Activated T-helper 1 cell treated with anti-CD3 and anti-CD28 coated beads, Interleukin-12 subunit alpha, Interleukin-12 subunit beta, Interleukin-2, Interleukin-4 antibody, amounts not matched to agents 30 ng/mL and 10 ng/mL and 1 ng/mL, durations not matched to agents 14 hours and 24 hours and 36 hours (primary cell): ENCODE measurements at regions of chr21 and their contacts with region 1.

Region 1: GRCh38 chr21:25464275-25464674 is 143.0 kb downstream of the MRPL39 start:
- DNase-seq: no peak
- H3K4me3 Mint-ChIP-seq: peak overlapping the region; percentile 58
- H3K27ac Mint-ChIP-seq: peak overlapping the region; percentile 90
- H3K4me1 Mint-ChIP-seq: peaks cover 62% of the 10 kb centered on the region
- H3K27me3 Mint-ChIP-seq: no peaks in the 10 kb centered on the region

Region 2: GRCh38 chr21:25421327-25422028 is 42.8 kb before region 1 on chr21:
- intact Hi-C with region 1: no loop called
- DNase-seq: peak; percentile 60
- H3K4me3 Mint-ChIP-seq: peak overlapping the region; percentile 77
- H3K27ac Mint-ChIP-seq: peak overlapping the region; percentile 77
- H3K4me1 Mint-ChIP-seq: peaks cover 46% of the 10 kb centered on the region
- H3K27me3 Mint-ChIP-seq: peaks cover 2% of the 10 kb centered on the region

Region 3: DNA sequence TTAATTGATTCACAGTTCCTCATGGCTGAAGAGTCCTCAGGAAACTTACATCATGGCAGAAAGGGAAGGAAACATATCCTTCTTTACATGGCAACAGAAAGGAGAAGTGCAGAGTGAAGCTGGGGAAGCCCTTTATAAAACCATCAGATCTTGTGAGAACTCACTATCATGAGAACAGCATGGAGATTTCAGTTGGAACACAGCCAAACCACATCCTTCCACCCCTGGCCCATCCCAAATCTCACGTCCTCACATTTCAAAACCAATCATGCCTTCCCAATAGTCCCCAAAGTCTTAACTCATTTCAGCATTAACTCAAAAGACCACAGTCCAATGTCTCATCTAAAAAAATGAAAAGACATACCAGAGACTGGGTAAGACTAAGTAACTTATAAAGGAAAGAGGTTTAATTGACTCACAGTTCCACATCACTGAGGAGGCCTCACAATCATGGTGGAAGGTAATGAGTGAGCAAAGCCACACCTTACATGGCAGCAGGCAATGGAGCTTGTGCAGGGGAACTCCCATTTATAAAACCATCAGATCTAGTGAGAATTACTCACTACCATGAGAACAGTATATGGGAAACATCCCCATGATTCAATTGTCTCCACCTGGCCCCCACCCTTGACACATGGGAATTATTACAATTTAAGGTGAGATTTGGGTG is 37.9 kb after region 1 on chr21:
- intact Hi-C with region 1: loop called (anchors 1 kb)
- DNase-seq: no peak
- H3K4me3 Mint-ChIP-seq: no peak overlapping the region
- H3K27ac Mint-ChIP-seq: peak overlapping the region; percentile 84
- H3K4me1 Mint-ChIP-seq: peaks cover 21% of the 10 kb centered on the region
- H3K27me3 Mint-ChIP-seq: no peaks in the 10 kb centered on the region

Region 4: DNA sequence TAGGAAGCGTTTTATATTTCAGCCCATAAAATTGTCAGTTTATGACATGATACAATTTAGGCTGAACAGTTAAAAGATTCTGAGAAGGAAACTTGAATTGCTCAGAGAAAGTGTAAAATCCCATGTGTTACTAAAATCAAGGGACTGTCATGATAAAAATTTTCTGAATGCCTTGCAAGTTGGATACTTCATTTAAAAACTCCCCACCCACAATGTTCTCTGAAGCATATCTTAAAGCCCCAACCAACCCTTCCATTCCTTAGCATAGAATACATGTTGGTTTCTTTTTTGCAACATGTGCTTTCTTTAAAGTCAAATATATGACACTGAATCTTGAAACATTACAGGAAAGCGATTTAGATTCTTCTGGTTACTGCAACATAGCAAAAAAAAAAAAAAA is 45.6 kb after region 1 on chr21:
- intact Hi-C with region 1: loop called (anchors 1 kb)
- DNase-seq: no peak
- H3K4me3 Mint-ChIP-seq: no peak overlapping the region
- H3K27ac Mint-ChIP-seq: peak overlapping the region; percentile 13
- H3K4me1 Mint-ChIP-seq: peaks cover 42% of the 10 kb centered on the region
- H3K27me3 Mint-ChIP-seq: no peaks in the 10 kb centered on the region